CD4-positive, alpha-beta T cell (primary cell): ENCODE measurements at regions of chr5 and their contacts with region 1.

Region 1: DNA sequence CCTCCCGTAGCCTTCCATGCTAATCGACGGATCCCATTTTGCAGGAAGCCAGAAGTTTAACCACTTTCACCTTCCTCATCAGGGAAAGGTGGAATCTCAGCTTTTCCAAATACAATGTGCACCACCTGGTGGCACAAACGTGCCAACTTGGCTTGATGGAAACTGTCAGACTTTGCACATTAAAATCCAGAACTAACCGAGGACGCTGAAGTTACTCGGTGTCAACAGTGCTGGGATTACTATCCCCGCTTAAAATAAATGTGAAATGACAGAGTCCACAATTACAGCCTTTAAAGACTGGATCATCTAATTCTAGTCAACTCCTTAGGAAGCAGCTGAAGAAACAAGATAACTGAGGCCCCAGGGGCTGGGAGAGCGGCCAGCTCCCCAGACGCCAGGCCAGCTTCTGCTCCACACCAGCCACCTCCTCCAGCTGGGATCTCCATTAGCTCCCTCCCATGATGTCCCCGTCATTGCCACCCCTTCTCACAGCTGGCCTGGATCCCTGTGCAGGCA is 50.1 kb upstream of the RETREG1 start:
- DNase-seq: peak in 12 of 14 experiments; percentile 9 to 63 (median 37)
- ATAC-seq: peak; percentile 41
- H3K4me3 ChIP-seq: no peak overlapping the region
- H3K4me3 Mint-ChIP-seq: no peak overlapping the region
- H3K27ac ChIP-seq: no peak overlapping the region
- H3K27ac Mint-ChIP-seq: no peak overlapping the region
- H3K4me1 ChIP-seq: peaks cover 7% of the 10 kb centered on the region
- H3K4me1 Mint-ChIP-seq: peaks cover 29% of the 10 kb centered on the region
- H3K27me3 ChIP-seq: no peaks in the 10 kb centered on the region
- H3K27me3 Mint-ChIP-seq: no peaks in the 10 kb centered on the region
- CTCF ChIP-seq: peak; percentile 78

Region 2: DNA sequence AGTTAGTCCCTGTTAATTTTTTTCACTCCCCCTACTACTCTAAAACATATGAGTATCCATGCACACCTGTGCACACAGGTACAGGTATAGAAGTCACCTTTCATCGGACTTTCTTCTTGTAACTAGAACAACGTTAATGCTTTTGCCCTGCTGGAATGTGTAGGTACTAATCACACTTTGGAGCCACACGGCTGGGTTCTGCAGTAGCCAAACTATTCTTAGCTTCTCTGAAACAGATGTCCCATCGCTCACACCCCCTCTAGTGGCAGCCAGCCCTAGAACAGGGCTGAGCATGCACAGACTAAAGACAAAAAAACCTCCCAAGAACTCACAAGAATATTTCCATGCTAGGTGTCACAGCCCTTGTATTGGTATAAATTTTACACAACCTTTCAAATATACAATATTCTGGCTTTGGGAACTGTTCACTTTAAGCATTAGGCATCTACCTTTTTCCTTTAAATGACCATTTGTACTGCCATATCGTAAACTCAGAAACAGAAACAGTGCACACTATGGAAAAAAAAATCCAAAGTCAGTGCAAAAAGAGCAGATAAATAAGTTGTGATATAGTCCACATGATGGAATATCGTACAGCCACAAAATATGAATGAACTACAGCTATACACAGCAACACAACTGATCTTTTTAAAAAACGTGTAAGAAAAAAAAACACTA is 114.1 kb before region 1 on chr5:
- CTCF ChIA-PET with region 1: interaction called, 3 read pairs
- POLR2A ChIA-PET with region 1: no interaction called
- intact Hi-C with region 1: loop called (anchors 10 kb)
- DNase-seq: peak; percentile 21 to 61 (median 41)
- ATAC-seq: peak; percentile 86
- H3K4me3 ChIP-seq: no peak overlapping the region
- H3K4me3 Mint-ChIP-seq: no peak overlapping the region
- H3K27ac ChIP-seq: no peak overlapping the region
- H3K27ac Mint-ChIP-seq: peak overlapping the region; percentile 0
- H3K4me1 ChIP-seq: no peaks in the 10 kb centered on the region
- H3K4me1 Mint-ChIP-seq: peaks cover 54% of the 10 kb centered on the region
- H3K27me3 ChIP-seq: no peaks in the 10 kb centered on the region
- H3K27me3 Mint-ChIP-seq: no peaks in the 10 kb centered on the region
- CTCF ChIP-seq: peak; percentile 79